ENCODE measurements at regions of chr4 and their contacts with region 1.

Region 1: GRCh38 chr4:169791527-169792156 is 33.9 kb upstream of the HPF1 start:
- DNase-seq: peak; percentile 81
- H3K4me3 ChIP-seq: peak overlapping the region; percentile 35 to 48
- H3K27ac ChIP-seq: peak overlapping the region in 1 of 2 experiments; percentile 80; a peak in 2 of 4 replicates
- H3K4me1 ChIP-seq: peaks cover 2 to 12% of the 10 kb centered on the region in 2 experiments; a peak in 2 of 4 replicates
- H3K27me3 ChIP-seq: no peaks in the 10 kb centered on the region
- CTCF ChIP-seq: peak; percentile 72
- EP300 ChIP-seq: no peak
- RAD21 ChIP-seq: peak; percentile 70

Region 2: DNA sequence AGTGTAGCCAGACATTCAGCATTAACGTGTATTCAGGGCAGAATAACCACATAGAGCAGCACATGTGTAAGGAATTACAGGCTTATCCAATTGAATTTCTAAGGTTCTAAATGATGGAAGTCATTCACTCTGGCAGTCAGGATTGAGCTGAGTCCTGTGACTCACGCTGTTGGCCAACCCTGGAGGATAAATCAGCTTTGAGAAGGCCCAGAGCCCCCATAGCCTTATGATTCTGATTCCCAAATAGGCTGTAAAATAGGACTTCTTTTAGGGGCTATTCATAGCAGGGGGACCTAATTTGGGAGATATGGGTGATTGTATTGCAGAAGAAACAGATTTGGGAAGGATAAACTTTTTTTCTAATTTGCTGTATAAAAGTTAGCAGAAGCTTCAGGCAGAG is 25.8 kb before region 1 on chr4:
- CTCF ChIA-PET with region 1: interaction called, 12 read pairs
- POLR2A ChIA-PET with region 1: no interaction called
- DNase-seq: peak; percentile 65
- H3K4me3 ChIP-seq: no peak overlapping the region
- H3K27ac ChIP-seq: peak overlapping the region; percentile 59 to 89; a peak in 3 of 4 replicates
- H3K4me1 ChIP-seq: peaks cover 0 to 11% of the 10 kb centered on the region in 2 experiments; a peak in 2 of 4 replicates
- H3K27me3 ChIP-seq: no peaks in the 10 kb centered on the region
- CTCF ChIP-seq: no peak
- EP300 ChIP-seq: peak; percentile 33 to 94; a peak in 3 of 4 replicates
- RAD21 ChIP-seq: peak; percentile 31

Region 3: DNA sequence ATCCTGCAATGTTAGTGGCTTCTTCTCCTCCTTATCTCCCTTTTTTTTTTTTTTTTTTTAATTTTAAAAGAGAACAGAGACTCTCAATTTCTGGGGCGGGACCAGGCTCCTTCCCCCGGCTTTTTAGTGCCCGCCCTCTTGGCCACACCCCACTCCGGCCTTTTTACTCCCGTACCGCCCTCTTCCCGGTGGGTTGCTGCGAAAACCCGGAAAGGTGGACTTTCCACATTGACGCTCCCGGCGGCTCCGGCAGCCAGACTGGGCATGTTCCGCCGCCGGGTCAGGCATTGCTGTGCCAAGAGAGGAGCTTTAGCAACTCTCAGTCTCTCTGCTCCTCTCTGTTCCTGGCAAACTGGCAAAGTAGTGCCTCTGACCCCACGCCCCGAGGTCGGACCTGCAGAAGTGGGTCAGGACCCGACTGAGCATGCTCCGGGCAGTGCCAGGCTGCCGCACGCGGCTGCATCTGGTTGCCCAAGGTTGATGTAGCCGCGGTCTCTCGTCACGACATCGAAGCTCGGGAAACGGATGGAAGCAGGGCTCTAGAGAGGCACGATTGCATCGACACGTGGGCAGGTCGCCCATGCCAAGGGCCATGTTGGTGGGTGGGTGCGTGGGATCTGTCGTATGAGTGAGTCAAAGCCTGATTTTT is 235.7 kb after region 1 on chr4:
- CTCF ChIA-PET with region 1: interaction called, 14 read pairs
- POLR2A ChIA-PET with region 1: no interaction called
- DNase-seq: peak; percentile 95
- H3K4me3 ChIP-seq: peak overlapping the region; percentile 87 to 98
- H3K27ac ChIP-seq: peak overlapping the region; percentile 89 to 92
- H3K4me1 ChIP-seq: peaks cover 0 to 3% of the 10 kb centered on the region in 2 experiments; a peak in 1 of 4 replicates
- H3K27me3 ChIP-seq: no peaks in the 10 kb centered on the region
- CTCF ChIP-seq: no peak
- EP300 ChIP-seq: no peak
- RAD21 ChIP-seq: no peak

Region 4: DNA sequence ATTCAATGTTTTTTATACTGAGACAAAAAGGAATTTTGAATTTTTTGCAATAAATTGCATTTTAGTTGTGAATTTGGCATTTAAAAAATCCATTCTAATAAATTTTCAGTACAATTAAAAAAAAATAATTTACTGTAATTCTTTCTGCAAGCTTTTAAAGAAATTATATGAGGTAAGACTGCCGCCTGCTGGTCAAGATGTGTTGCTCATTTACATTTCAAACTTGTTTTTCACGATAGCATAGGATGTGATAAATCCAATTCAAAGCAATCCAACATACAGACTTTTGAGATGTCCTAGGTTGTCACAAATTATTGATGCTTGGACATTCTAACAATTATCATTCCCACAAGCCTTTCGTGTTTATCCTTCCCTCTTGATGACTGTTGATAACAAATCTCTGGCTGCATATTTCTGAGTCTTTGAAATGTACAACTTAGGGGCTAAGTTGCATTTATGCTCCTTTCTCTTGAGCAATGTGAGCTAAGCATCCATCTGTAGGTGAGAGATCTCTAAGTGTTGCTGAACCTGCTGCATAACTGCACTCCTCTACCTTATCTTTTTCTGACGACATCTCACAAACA is 256.2 kb after region 1 on chr4:
- CTCF ChIA-PET with region 1: interaction called, 13 read pairs
- POLR2A ChIA-PET with region 1: no interaction called
- DNase-seq: peak; percentile 51
- H3K4me3 ChIP-seq: no peak overlapping the region
- H3K27ac ChIP-seq: no peak overlapping the region
- H3K4me1 ChIP-seq: no peaks in the 10 kb centered on the region
- H3K27me3 ChIP-seq: no peaks in the 10 kb centered on the region
- CTCF ChIP-seq: peak; percentile 89
- EP300 ChIP-seq: no peak
- RAD21 ChIP-seq: peak; percentile 86